B cell (primary cell): ENCODE measurements at regions of chrX and their contacts with region 1.

Region 1: DNA sequence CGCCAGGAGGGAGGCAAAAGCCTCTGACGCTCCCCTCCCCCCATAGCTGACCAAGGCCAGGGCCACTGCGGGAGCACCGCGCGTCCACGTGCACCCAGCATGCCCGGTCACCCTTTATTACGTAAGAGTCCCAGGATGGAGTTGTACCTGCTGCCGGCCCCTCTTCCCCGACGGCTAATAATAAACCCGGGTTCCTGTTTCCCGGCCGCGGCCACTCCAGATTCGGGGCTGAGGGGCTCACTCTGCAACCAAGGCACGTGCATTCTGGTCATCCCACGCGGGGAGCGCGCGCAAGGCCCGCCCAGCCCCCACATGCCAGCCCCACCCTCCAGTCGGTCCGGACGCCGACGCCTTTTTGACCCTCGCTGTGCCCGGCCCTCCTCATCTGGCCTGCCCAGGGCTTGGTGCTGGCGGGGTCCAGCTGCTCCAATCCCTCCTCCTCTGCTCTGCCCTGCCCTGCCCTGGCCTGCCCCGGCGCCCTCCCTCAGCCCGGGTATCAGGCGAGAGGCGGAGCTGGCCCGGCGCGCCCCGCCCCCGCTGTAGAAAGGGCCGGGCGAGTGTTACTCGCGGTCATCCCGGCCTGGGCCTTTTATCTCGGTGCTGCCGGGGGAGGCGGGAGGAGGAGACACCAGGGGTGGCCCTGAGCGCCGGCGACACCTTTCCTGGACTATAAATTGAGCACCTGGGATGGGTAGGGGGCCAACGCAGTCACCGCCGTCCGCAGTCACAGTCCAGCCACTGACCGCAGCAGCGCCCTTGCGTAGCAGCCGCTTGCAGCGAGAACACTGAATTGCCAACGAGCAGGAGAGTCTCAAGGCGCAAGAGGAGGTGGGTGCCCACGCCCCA is 2.5 kb downstream of the MID1IP1 start:
- DNase-seq: peak; percentile 56
- ATAC-seq: peak; percentile 68
- H3K4me3 ChIP-seq: peak overlapping the region; percentile 41 to 69 (median 64)
- H3K4me3 Mint-ChIP-seq: peak overlapping the region; percentile 91
- H3K27ac ChIP-seq: peak overlapping the region; percentile 78 to 82
- H3K27ac Mint-ChIP-seq: peak overlapping the region; percentile 88
- H3K4me1 ChIP-seq: peaks cover 14 to 32% of the 10 kb centered on the region in 2 donors
- H3K4me1 Mint-ChIP-seq: peaks cover 35% of the 10 kb centered on the region
- H3K27me3 ChIP-seq: peaks cover 0 to 2% (median 0%) of the 10 kb centered on the region in 4 experiments
- H3K27me3 Mint-ChIP-seq: peaks cover 3% of the 10 kb centered on the region
- CTCF ChIP-seq: no peak

Region 2: DNA sequence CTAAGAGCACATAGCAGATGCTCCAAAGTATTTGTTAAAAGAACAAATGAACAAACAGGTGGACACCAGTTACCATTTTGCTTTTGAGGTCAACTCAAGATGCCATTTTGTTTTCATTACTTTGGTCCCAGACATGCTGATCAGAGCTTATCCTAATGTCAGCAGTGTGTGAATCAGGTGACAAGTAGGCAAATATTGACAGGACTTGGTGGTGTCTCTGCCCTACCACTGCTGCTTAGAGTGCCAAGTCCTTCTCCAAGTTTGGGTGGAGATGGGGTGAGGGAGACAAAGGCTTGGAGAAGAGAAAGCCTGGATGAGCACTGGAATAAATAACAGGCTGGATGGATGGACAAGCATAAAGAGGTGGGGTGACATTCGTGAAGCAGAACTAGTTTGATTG is 36.1 kb after region 1 on chrX:
- CTCF ChIA-PET with region 1: no interaction called
- POLR2A ChIA-PET with region 1: no interaction called
- intact Hi-C with region 1: no loop called
- DNase-seq: no peak
- ATAC-seq: no peak
- H3K4me3 ChIP-seq: no peak overlapping the region
- H3K4me3 Mint-ChIP-seq: no peak overlapping the region
- H3K27ac ChIP-seq: no peak overlapping the region
- H3K27ac Mint-ChIP-seq: no peak overlapping the region
- H3K4me1 ChIP-seq: no peaks in the 10 kb centered on the region
- H3K4me1 Mint-ChIP-seq: no peaks in the 10 kb centered on the region
- H3K27me3 ChIP-seq: no peaks in the 10 kb centered on the region
- H3K27me3 Mint-ChIP-seq: peaks cover 3% of the 10 kb centered on the region
- CTCF ChIP-seq: no peak

Region 3: GRCh38 chrX:38879631-38880220 is 75.9 kb after region 1 on chrX:
- CTCF ChIA-PET with region 1: interaction called, 15 read pairs
- POLR2A ChIA-PET with region 1: interaction called, 41 read pairs
- intact Hi-C with region 1: loop called (anchors 2 kb)
- DNase-seq: peak; percentile 80
- ATAC-seq: peak; percentile 86
- H3K4me3 ChIP-seq: peak overlapping the region in 3 of 5 experiments; percentile 6 to 25 (median 13)
- H3K4me3 Mint-ChIP-seq: peak overlapping the region; percentile 75
- H3K27ac ChIP-seq: peak overlapping the region; percentile 78 to 80
- H3K27ac Mint-ChIP-seq: peak overlapping the region; percentile 97
- H3K4me1 ChIP-seq: peaks cover 34 to 45% of the 10 kb centered on the region in 2 donors
- H3K4me1 Mint-ChIP-seq: peaks cover 44% of the 10 kb centered on the region
- H3K27me3 ChIP-seq: no peaks in the 10 kb centered on the region
- H3K27me3 Mint-ChIP-seq: no peaks in the 10 kb centered on the region
- CTCF ChIP-seq: no peak